ENCODE measurements at regions of chr5 and their contacts with region 1.

Region 1: DNA sequence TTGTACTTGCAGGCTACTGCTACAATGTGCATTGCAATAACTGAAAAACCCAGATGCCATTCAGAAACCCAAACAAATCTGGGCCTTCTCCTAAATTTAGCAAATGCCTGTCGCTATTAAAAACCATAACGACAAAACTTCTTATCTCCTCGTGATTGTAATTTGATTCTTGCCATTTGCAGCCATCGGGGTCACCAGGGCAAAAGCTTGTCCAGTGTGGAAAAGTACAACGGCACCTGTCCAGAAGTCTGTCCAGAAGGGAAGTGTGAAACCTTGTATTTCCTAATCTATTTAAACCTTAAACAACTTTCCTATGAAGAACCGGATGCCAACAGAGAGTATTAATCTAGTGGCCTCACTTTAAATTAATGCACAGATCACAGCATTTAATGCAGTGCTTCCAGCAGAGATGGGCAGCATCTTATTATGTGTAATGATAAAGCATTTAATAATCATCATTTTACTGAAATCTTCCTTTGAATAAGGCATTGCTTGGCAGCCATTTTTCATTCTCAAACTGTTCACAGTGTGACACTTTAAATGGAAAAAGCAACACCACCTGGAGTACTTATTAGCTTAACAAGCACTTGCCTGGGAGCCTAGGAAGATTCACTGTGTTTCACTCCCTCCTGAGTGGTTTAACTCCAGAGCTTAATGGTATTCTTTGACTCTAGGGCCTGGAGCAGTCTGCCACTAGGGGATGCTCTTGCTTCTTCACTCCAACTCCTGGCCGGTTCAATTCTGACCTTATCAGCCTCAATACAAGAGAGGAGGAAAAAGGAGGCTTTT is 4.9 kb upstream of the C7 start:
- DNase-seq: peak; percentile 60 to 79
- H3K4me3 ChIP-seq: no peak overlapping the region
- H3K27ac ChIP-seq: no peak overlapping the region
- H3K4me1 ChIP-seq: no peaks in the 10 kb centered on the region
- H3K27me3 ChIP-seq: no peaks in the 10 kb centered on the region
- CTCF ChIP-seq: peak; percentile 98

Region 2: GRCh38 chr5:40736103-40736875 is 168.1 kb before region 1 on chr5:
- CTCF ChIA-PET with region 1: no interaction called
- POLR2A ChIA-PET with region 1: no interaction called
- intact Hi-C with region 1: no loop called
- DNase-seq: peak in 1 of 2 experiments; percentile 56
- H3K4me3 ChIP-seq: no peak overlapping the region
- H3K27ac ChIP-seq: no peak overlapping the region
- H3K4me1 ChIP-seq: 0 out of 2 replicates have a peak, but pooled peaks cover 8% of the 10 kb centered on the region
- H3K27me3 ChIP-seq: no peaks in the 10 kb centered on the region
- CTCF ChIP-seq: peak; percentile 91

Region 3: DNA sequence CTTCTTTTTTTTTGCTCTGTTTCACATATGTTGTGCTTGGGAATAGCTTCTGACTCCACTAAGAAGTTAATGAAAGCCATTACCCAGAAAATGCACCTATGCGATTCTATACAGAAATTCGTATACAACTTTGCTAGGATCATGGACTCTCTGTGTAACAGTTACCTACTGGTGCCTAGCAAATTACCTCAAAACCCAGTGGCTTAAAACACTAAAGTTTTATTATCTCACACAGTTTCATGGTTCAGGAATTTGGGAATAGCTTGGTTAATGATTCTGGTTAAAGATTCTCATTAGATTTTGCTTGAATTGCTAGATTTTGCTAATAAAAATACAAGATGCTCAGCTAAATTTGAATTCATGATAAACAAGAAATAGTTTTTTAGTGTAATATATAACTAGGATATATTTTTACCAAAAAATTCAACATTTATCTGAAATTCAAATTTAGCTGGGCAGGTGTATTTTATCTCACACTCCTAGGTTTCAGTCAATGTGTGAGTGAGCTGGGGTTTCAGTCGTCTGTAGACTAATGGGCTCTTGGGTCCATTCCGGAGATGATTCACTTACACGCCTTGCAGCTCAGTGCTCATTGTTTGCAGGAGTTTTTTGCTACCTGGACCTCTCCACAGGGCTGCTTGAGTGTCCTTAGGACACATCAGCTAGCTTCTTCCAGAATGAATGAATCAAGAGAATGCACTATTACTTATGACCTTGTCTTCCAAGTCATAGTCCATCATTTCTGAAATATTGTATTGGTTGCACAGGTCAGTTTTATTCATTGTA is 91.6 kb after region 1 on chr5:
- CTCF ChIA-PET with region 1: no interaction called
- POLR2A ChIA-PET with region 1: no interaction called
- intact Hi-C with region 1: loop called (anchors 5 kb)
- DNase-seq: no peak
- H3K4me3 ChIP-seq: no peak overlapping the region
- H3K27ac ChIP-seq: no peak overlapping the region
- H3K4me1 ChIP-seq: peaks cover 14% of the 10 kb centered on the region
- H3K27me3 ChIP-seq: no peaks in the 10 kb centered on the region
- CTCF ChIP-seq: no peak

Region 4: GRCh38 chr5:41270423-41271251 is 366.2 kb after region 1 on chr5:
- CTCF ChIA-PET with region 1: interaction called, 9 read pairs
- POLR2A ChIA-PET with region 1: no interaction called
- intact Hi-C with region 1: loop called (anchors 2 kb)
- DNase-seq: peak; percentile 41
- H3K4me3 ChIP-seq: no peak overlapping the region
- H3K27ac ChIP-seq: no peak overlapping the region
- H3K4me1 ChIP-seq: no peaks in the 10 kb centered on the region
- H3K27me3 ChIP-seq: no peaks in the 10 kb centered on the region
- CTCF ChIP-seq: peak; percentile 83

Region 5: DNA sequence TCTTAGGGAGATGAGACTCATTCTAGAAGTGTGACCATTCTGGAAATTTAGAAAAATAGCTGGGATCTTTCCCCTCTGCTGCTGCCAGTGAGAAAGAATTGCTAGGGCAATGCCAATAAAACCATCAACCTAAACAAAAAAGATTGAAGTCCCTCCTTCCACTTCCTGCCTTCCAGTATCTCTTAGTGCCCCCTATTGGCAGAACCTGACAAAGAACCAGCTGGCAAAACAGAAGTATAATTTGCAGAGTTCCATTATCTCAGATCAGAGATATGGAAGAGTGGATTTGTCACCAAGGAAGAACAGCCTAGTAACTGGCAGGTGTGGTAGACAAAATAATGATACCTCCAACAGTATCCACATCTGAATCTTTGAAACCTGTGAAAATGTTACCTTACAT is 619.8 kb after region 1 on chr5:
- CTCF ChIA-PET with region 1: no interaction called
- POLR2A ChIA-PET with region 1: no interaction called
- intact Hi-C with region 1: loop called (anchors 2 kb)
- DNase-seq: no peak
- H3K4me3 ChIP-seq: no peak overlapping the region
- H3K27ac ChIP-seq: no peak overlapping the region
- H3K4me1 ChIP-seq: peaks cover 17% of the 10 kb centered on the region
- H3K27me3 ChIP-seq: no peaks in the 10 kb centered on the region
- CTCF ChIP-seq: peak; percentile 41; the same call in 1 of the 2 replicates

Region 6: DNA sequence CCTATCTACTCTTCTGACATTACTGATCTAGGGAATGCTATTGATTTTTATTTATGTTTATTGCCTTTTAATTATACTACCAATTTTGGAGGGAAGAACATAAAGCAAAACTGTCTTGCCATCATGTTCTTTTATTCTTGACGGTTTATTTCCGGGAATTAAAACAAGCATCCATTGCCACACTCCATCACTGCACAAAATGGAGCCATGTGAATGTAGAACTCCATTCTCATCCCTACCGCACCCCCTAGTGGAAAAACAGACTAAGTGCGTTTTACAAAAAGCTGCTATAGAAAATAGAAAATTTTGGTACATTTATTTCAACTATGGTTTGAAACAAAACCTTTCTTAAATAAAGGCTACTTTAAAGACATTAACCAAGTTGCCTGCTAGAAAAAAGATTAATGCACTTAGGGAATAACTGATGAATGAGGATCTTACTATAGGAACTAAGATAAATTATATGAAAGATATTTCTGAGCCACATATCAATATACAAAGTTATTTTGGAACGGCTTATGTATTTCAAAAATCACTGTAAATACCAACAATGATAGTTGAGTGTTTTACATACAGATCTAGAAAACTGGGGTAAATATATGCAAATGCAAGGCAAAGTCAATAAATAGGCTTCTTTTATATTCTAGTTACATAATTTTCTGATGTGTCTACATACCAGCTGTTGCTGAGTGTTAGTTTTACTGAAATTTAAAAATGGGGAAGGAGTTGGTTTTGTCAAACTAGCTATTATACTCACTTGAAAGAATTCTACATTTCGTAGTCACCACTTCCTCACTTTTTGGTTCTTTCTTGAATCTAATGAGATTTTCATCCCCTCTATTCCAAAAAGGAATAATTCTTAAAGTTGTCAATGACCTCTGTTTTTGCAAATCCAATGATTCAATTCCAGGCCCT is 939.3 kb after region 1 on chr5:
- CTCF ChIA-PET with region 1: interaction called, 6 read pairs
- POLR2A ChIA-PET with region 1: no interaction called
- intact Hi-C with region 1: loop called (anchors 1 kb)
- DNase-seq: peak; percentile 35 to 50
- H3K4me3 ChIP-seq: no peak overlapping the region
- H3K27ac ChIP-seq: no peak overlapping the region
- H3K4me1 ChIP-seq: no peaks in the 10 kb centered on the region
- H3K27me3 ChIP-seq: no peaks in the 10 kb centered on the region
- CTCF ChIP-seq: peak; percentile 96

Measured in PC-9 (cell line).